Activated CD4-positive, alpha-beta T cell treated with anti-CD3 and anti-CD28 coated beads for 36 hours (primary cell): ENCODE measurements at regions of chr10 and their contacts with region 1.

Region 1: DNA sequence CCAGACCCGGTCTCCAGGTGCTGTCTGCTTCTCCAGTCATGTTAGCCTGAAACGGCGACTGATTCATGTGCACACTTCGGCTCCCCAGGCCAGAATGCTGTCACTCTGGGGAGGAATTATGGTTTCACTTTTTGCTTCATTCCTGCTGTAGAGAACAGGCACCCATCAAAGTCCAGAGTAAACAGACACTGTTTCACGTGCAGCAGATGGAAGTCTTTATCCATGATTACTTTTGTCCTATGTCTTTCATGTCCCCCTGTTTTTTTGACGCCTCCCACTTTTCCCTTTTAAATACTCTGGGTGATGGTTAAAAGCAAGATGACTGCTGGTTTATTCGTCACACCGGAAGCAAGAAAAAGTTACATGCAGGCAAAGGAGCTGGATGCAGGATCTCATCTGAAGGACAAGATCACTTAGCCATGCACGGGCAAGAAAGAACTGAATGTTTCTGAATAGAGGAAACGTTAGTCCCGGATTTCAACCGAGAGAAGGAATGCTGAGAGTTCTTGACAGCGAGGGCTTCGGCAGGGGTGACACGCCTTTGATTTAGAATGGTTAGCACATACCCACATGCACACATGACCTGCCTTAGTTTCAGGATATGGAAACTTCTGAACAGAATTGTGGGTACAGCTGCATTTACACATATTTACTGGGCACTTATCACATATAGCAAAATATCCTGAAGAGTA is 250.0 kb upstream of the KLF6 start:
- DNase-seq: peak; percentile 64
- ATAC-seq: peak; percentile 63
- H3K4me3 Mint-ChIP-seq: peak overlapping the region; percentile 49
- H3K27ac Mint-ChIP-seq: peak overlapping the region; percentile 90
- H3K4me1 Mint-ChIP-seq: peaks cover 30% of the 10 kb centered on the region
- H3K27me3 Mint-ChIP-seq: no peaks in the 10 kb centered on the region

Region 2: GRCh38 chr10:3972460-3973301 is 62.4 kb before region 1 on chr10:
- CTCF ChIA-PET with region 1: no interaction called
- POLR2A ChIA-PET with region 1: no interaction called
- intact Hi-C with region 1: loop called in 1 of 2 experiments (anchors 5 kb)
- DNase-seq: peak; percentile 63
- ATAC-seq: peak; percentile 88
- H3K4me3 Mint-ChIP-seq: peak overlapping the region; percentile 52
- H3K27ac Mint-ChIP-seq: peak overlapping the region; percentile 93
- H3K4me1 Mint-ChIP-seq: peaks cover 48% of the 10 kb centered on the region
- H3K27me3 Mint-ChIP-seq: no peaks in the 10 kb centered on the region

Region 3: DNA sequence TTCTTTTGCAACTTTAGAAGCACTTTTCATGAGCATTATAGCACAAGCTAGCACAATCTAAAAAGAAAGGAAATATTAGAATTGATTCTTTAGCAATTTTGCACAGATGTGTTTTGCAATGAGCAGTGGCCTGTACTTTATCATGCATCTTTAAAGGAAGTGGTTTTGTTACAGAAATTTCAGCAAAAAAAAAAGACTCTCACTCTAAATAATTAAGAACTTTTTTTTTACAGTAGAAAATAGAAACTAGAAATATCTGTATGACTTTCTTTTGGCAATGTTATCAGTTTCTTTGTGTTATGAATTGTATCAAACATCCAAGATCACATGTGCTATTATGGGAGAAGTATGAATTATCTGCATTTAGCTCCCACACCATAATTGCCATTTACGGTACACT is 54.4 kb before region 1 on chr10:
- CTCF ChIA-PET with region 1: no interaction called
- POLR2A ChIA-PET with region 1: no interaction called
- intact Hi-C with region 1: loop called in 1 of 2 experiments (anchors 5 kb)
- DNase-seq: no peak
- ATAC-seq: peak; percentile 38
- H3K4me3 Mint-ChIP-seq: no peak overlapping the region
- H3K27ac Mint-ChIP-seq: no peak overlapping the region
- H3K4me1 Mint-ChIP-seq: peaks cover 41% of the 10 kb centered on the region
- H3K27me3 Mint-ChIP-seq: no peaks in the 10 kb centered on the region

Region 4: GRCh38 chr10:4067531-4067930 is 32.5 kb after region 1 on chr10:
- CTCF ChIA-PET with region 1: no interaction called
- POLR2A ChIA-PET with region 1: interaction called, 3 read pairs
- intact Hi-C with region 1: loop called (anchors 1 to 2 kb)
- DNase-seq: peak; percentile 46
- ATAC-seq: peak; percentile 66
- H3K4me3 Mint-ChIP-seq: no peak overlapping the region
- H3K27ac Mint-ChIP-seq: no peak overlapping the region
- H3K4me1 Mint-ChIP-seq: peaks cover 8% of the 10 kb centered on the region
- H3K27me3 Mint-ChIP-seq: no peaks in the 10 kb centered on the region

Region 5: DNA sequence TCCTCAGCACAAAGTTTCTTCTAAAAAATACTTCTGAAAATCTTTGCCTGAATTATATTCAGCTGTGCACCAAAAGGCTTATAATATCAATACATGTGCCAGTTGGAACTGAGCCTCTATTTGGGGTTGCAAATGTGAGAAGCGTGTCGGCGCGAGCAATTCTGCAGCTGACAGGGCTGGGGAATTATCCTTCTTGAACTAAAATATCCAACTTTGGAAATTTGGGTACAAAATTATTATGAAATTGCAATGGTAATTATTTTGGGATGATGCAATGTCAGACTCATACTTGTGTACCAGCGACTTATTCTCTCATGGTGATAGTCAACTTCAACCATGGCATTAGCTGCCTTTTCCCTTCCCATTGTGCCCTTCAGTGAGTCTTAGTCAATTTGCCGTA is 256.9 kb after region 1 on chr10:
- CTCF ChIA-PET with region 1: no interaction called
- POLR2A ChIA-PET with region 1: no interaction called
- intact Hi-C with region 1: no loop called
- DNase-seq: no peak
- ATAC-seq: no peak
- H3K4me3 Mint-ChIP-seq: no peak overlapping the region
- H3K27ac Mint-ChIP-seq: no peak overlapping the region
- H3K4me1 Mint-ChIP-seq: no peaks in the 10 kb centered on the region
- H3K27me3 Mint-ChIP-seq: no peaks in the 10 kb centered on the region

Region 6: GRCh38 chr10:5142199-5142598 is 1107.1 kb after region 1 on chr10:
- CTCF ChIA-PET with region 1: no interaction called
- POLR2A ChIA-PET with region 1: no interaction called
- intact Hi-C with region 1: no loop called
- DNase-seq: no peak
- ATAC-seq: no peak
- H3K4me3 Mint-ChIP-seq: no peak overlapping the region
- H3K27ac Mint-ChIP-seq: no peak overlapping the region
- H3K4me1 Mint-ChIP-seq: no peaks in the 10 kb centered on the region
- H3K27me3 Mint-ChIP-seq: peaks cover 2% of the 10 kb centered on the region